ENCODE measurements at regions of chr14 and their contacts with region 1.

Region 1: DNA sequence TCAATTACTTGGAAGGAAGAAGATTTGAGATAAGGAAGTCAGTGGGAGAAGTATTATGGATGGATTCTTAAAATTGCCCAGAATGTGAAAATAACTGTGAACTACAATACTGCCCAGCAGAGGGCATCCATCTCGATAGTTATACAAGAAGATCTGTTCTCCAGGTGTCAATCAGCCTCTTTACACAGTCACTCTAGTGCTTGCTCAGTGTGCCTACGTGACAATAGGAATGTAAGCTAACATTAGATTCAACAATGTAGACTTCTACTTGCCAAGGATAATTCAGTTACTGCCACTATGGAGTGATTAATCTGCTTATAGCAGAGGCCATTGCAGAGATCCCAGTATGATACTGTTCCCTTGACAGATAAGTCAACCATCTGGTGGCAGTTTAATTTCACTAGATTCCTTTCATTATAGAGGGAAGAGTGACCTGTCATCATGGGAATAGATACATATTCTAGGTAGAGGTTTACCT is 10.6 kb upstream of the MAP4K5 start:
- DNase-seq: peak; percentile 68
- ATAC-seq: peak; percentile 95
- H3K4me3 Mint-ChIP-seq: no peak overlapping the region
- H3K27ac Mint-ChIP-seq: peak overlapping the region; percentile 64
- H3K4me1 Mint-ChIP-seq: peaks cover 17% of the 10 kb centered on the region
- H3K27me3 Mint-ChIP-seq: peaks cover 1% of the 10 kb centered on the region
- CTCF ChIP-seq: peak; percentile 82

Region 2: DNA sequence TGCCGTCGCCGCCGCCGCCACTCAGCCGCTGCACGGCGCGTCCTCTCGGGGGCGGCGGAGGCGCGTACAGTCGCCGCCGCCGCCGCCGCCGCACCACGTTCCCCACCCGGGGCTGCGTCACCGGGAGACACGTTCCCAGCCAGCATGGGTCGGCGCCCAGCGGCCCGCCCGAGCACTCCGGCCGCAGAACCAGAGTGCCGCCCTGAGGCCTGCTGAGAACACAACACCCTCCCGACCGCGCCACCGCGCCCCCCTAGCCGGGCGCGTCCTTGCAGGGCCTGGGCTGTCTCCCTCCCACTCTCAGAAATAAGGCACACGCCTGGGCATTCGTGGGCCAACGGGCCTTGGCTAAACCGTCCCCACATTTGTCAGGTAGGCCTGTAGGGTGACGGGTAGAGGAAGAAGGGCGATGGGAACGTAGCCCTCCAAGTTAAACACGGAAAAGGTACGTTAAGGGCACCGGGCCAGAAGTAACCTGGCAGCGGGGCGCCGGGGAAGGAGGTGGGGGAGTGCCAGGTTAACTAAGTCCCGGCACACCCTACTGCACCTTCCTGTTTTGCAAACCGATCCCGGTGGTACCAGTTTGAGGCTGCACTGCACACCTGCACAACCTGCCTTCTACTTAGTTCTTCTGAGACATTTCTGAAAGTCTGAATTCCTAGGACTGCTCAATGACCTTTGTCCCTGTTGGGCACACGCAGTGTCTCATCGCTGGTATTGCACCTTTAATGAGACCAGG is 10.3 kb before region 1 on chr14 and contains the start of gene MAP4K5:
- CTCF ChIA-PET with region 1: interaction called, 10 read pairs
- POLR2A ChIA-PET with region 1: interaction called, 3 read pairs
- intact Hi-C with region 1: no loop called
- DNase-seq: peak; percentile 92
- ATAC-seq: peak; percentile 97
- H3K4me3 Mint-ChIP-seq: peak within 1 kb of the TSS; percentile 93
- H3K27ac Mint-ChIP-seq: peak within 1 kb of the TSS; percentile 89
- H3K4me1 Mint-ChIP-seq: peaks cover 38% of the 10 kb centered on the region
- H3K27me3 Mint-ChIP-seq: no peaks in the 10 kb centered on the region
- CTCF ChIP-seq: peak; percentile 90
- total RNA-seq, gene MAP4K5: 26.2 to 28.1 TPM

Region 3: DNA sequence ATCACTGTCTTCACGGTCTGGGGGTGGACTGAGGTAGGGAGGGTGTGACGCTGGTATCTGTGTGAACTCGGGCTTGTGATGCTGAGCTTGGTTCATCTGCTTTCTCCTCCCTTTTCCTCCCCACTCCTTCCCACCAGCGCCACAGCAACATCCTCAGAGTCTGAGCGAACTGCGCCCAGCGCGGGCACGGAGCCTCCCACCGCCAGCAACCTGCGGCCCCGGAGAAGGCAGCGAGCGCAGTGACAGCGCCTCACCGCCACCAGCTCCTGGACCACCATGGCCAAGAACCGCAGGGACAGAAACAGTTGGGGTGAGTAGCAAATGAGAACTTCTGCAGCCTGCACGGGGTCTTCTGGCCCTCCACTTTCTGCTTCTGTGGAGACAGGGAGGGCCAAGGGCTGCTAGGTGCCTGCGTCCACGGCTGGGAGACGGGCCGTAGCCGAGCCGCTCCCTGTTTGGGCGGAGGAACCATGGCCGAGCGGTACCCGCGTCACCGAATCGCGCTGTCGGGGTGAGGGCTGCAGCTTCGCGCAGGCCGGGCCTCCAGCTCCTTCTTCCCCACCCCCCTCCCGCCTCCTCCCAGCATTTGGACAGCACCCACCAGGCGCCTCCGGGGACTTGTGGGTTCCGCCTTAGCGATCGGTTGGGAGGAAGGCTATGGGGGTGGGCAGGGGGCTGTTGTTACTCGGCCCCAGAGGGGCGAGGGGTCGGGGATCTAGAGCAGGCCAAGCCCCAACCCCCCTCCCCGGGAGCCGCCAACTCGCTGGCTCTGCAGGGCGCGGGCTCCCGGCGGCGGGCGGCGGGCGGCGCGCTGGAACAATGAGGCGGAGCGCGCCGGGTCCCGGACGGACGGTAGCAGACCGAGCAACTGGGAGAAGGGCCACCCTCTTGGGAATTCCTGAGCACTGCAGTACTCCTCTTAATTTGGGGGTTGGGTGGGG is 17.3 kb after region 1 on chr14 and contains the start of gene ATL1:
- CTCF ChIA-PET with region 1: interaction called, 16 read pairs
- POLR2A ChIA-PET with region 1: no interaction called
- intact Hi-C with region 1: no loop called
- DNase-seq: peak; percentile 65
- ATAC-seq: peak; percentile 84
- H3K4me3 Mint-ChIP-seq: peak within 1 kb of the TSS; percentile 78
- H3K27ac Mint-ChIP-seq: no peak within 1 kb of the TSS
- H3K4me1 Mint-ChIP-seq: peaks cover 6% of the 10 kb centered on the region
- H3K27me3 Mint-ChIP-seq: peaks cover 47% of the 10 kb centered on the region
- CTCF ChIP-seq: no peak
- total RNA-seq, gene ATL1: 0.81 to 1.1 TPM

Region 4: DNA sequence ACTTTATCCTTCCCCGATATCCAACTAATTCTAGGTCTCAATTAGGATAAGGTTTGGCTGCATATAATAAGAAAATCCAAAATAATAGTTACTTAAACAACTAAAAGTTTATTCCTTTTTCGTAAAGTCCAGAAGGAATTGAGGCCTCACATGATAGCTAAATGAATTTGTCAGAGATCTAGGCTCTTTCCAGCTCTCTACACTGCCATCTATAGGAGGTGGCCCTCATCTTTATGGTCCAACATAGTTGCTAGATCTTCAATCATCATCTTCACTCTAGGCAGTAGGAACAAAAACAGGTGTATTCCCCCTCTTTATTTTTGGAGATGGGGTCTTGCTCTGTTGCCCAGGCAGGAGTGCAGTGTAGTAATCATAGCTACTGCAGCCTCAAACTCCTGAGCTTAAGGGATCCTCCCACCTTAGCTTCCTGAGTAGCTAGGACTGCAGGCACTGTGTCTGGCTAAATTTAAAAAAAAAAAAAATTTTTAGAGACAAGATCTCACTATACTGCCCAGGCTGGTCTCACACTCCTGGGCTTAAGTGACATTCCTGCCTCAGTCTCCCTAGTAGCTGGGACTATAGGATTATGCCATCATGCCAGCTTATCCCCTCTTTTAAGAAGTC is 171.6 kb after region 1 on chr14:
- CTCF ChIA-PET with region 1: interaction called, 10 read pairs
- POLR2A ChIA-PET with region 1: no interaction called
- intact Hi-C with region 1: no loop called
- DNase-seq: peak; percentile 13
- ATAC-seq: peak; percentile 74
- H3K4me3 Mint-ChIP-seq: no peak overlapping the region
- H3K27ac Mint-ChIP-seq: no peak overlapping the region
- H3K4me1 Mint-ChIP-seq: no peaks in the 10 kb centered on the region
- H3K27me3 Mint-ChIP-seq: no peaks in the 10 kb centered on the region
- CTCF ChIP-seq: peak; percentile 42

Region 5: GRCh38 chr14:50785457-50786063 is 242.6 kb after region 1 on chr14:
- CTCF ChIA-PET with region 1: interaction called, 3 read pairs
- POLR2A ChIA-PET with region 1: no interaction called
- intact Hi-C with region 1: loop called (anchors 5 kb)
- DNase-seq: no peak
- ATAC-seq: no peak
- H3K4me3 Mint-ChIP-seq: no peak overlapping the region
- H3K27ac Mint-ChIP-seq: peak overlapping the region; percentile 77
- H3K4me1 Mint-ChIP-seq: peaks cover 89% of the 10 kb centered on the region
- H3K27me3 Mint-ChIP-seq: no peaks in the 10 kb centered on the region
- CTCF ChIP-seq: no peak